ENCODE measurements at regions of chr12 and their contacts with region 1.

Region 1: DNA sequence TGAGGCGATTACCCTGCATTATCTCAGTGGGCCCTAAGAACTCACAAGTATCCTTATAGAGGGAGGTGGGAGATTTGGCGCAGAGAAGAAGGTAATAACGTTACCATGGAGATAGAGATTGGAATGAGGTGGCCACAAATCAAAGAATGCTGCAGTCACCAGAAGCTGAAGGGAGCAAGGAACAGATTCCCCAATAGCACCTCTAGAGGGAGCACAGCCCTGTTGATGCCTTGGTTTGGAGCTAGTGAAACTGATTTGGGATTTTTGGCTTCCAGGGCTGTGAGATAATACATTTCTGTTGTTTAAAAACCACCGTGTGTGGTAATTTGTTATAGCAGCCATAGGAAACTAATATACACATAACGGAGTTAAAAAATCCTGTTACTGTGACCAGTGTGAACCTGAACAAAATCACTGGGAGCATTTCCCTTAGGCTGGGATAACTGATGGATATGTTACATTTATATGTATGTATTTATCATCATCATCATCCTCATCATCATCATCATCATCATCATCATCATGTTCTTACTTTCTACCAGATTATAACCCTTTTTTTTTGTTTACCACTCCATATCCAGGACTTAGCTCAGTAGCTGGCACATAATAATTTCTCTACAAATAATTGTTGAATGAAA is 100.3 kb downstream of the LIN7A start:
- DNase-seq: peak; percentile 36
- H3K4me3 ChIP-seq: no peak overlapping the region
- H3K27ac ChIP-seq: no peak overlapping the region
- H3K4me1 ChIP-seq: no peaks in the 10 kb centered on the region
- H3K27me3 ChIP-seq: no peaks in the 10 kb centered on the region
- CTCF ChIP-seq: peak; percentile 66 to 83
- POLR2A ChIP-seq: no peak

Region 2: GRCh38 chr12:80607361-80608135 is 229.9 kb before region 1 on chr12:
- CTCF ChIA-PET with region 1: no interaction called
- POLR2A ChIA-PET with region 1: no interaction called
- dilution Hi-C with region 1: no loop called
- intact Hi-C with region 1: no loop called
- DNase-seq: no peak
- H3K4me3 ChIP-seq: no peak overlapping the region
- H3K27ac ChIP-seq: no peak overlapping the region
- H3K4me1 ChIP-seq: no peaks in the 10 kb centered on the region
- H3K27me3 ChIP-seq: no peaks in the 10 kb centered on the region
- CTCF ChIP-seq: no peak
- POLR2A ChIP-seq: no peak

Region 3: GRCh38 chr12:80825506-80825905 is 12.0 kb before region 1 on chr12:
- CTCF ChIA-PET with region 1: interaction called, 10 read pairs
- POLR2A ChIA-PET with region 1: no interaction called
- dilution Hi-C with region 1: no loop called
- intact Hi-C with region 1: no loop called
- DNase-seq: no peak
- H3K4me3 ChIP-seq: no peak overlapping the region
- H3K27ac ChIP-seq: no peak overlapping the region
- H3K4me1 ChIP-seq: no peaks in the 10 kb centered on the region
- H3K27me3 ChIP-seq: no peaks in the 10 kb centered on the region
- CTCF ChIP-seq: no peak
- POLR2A ChIP-seq: no peak

Region 4: DNA sequence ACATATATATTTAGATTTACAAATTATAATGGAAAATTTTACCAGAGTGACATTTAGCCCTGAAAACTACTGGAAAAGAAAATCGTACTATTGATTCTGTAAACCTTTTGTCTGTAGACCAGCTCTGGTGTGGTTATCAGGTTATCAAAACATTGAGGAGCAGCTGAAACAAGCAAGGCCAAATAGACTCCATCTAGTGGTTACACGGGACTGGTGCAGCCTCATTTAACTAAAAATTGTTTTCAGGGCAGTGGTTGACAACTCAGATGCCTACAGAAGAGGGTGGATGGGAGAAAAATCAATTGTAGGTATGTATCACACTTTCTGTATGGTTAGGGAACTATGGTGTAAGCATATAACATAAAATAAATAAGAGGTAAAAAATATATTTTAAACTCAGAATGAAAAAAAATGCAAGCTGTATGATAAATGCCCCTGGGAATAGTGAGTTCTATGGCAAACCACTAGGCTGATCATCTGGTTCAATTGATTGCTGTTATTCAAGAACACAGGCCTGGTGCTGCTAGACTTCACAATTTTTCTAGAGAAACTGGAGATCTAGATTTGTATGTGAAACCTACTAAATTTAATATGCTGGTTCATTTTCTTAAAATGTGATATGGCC is 291.6 kb after region 1 on chr12:
- CTCF ChIA-PET with region 1: interaction called, 44 read pairs
- POLR2A ChIA-PET with region 1: no interaction called
- dilution Hi-C with region 1: no loop called
- intact Hi-C with region 1: loop called (anchors 1 kb)
- DNase-seq: peak; percentile 60
- H3K4me3 ChIP-seq: no peak overlapping the region
- H3K27ac ChIP-seq: no peak overlapping the region
- H3K4me1 ChIP-seq: no peaks in the 10 kb centered on the region
- H3K27me3 ChIP-seq: no peaks in the 10 kb centered on the region
- CTCF ChIP-seq: peak; percentile 78 to 81
- POLR2A ChIP-seq: no peak